Activated naive CD4-positive, alpha-beta T cell treated with anti-CD3 and anti-CD28 coated beads for 36 hours (primary cell): ENCODE measurements at regions of chr10 and their contacts with region 1.

Region 1: DNA sequence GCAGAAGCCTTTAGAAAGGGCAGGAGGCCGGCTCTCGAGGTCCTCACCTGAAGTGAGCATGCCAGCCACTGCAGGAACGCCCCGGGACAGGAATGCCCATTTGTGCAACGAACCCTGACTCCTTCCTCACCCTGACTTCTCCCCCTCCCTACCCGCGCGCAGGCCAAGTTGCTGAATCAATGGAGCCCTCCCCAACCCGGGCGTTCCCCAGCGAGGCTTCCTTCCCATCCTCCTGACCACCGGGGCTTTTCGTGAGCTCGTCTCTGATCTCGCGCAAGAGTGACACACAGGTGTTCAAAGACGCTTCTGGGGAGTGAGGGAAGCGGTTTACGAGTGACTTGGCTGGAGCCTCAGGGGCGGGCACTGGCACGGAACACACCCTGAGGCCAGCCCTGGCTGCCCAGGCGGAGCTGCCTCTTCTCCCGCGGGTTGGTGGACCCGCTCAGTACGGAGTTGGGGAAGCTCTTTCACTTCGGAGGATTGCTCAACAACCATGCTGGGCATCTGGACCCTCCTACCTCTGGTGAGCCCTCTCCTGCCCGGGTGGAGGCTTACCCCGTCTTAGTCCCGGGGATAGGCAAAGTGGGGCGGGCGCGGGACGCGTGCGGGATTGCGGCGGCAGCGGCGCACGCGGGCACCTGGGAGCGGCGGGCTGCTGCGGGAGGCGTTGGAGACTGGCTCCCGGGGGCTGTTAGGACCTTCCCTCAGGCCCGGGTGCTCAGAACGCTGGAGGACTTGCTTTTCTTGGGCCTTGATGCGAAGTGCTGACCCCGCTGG is at the start of gene FAS:
- DNase-seq: peak; percentile 96
- H3K4me3 Mint-ChIP-seq: peak within 1 kb of the TSS; percentile 92
- H3K27ac Mint-ChIP-seq: peak within 1 kb of the TSS; percentile 98
- H3K4me1 Mint-ChIP-seq: peaks cover 46% of the 10 kb centered on the region
- H3K27me3 Mint-ChIP-seq: no peaks in the 10 kb centered on the region
- total RNA-seq, gene FAS: 69.3 to 72.9 TPM

Region 2: GRCh38 chr10:88582806-88583583 is 407.6 kb before region 1 on chr10 and contains the start of gene RNLS:
- CTCF ChIA-PET with region 1: interaction called, 3 read pairs
- intact Hi-C with region 1: loop called (anchors 5 kb)
- DNase-seq: peak; percentile 76
- H3K4me3 Mint-ChIP-seq: peak within 1 kb of the TSS; percentile 82
- H3K27ac Mint-ChIP-seq: peak within 1 kb of the TSS; percentile 89
- H3K4me1 Mint-ChIP-seq: peaks cover 11% of the 10 kb centered on the region
- H3K27me3 Mint-ChIP-seq: peaks cover 5% of the 10 kb centered on the region
- total RNA-seq, gene RNLS: 4.0 to 4.4 TPM

Region 3: GRCh38 chr10:88880282-88881076 is 110.1 kb before region 1 on chr10:
- CTCF ChIA-PET with region 1: interaction called, 4 read pairs
- intact Hi-C with region 1: loop called (anchors 1 kb)
- DNase-seq: peak; percentile 82
- H3K4me3 Mint-ChIP-seq: peak overlapping the region; percentile 95
- H3K27ac Mint-ChIP-seq: peak overlapping the region; percentile 97
- H3K4me1 Mint-ChIP-seq: peaks cover 58% of the 10 kb centered on the region
- H3K27me3 Mint-ChIP-seq: no peaks in the 10 kb centered on the region

Region 4: GRCh38 chr10:88974446-88975376 is 15.9 kb before region 1 on chr10:
- CTCF ChIA-PET with region 1: interaction called, 6 read pairs
- intact Hi-C with region 1: loop called (anchors 1 kb)
- DNase-seq: no peak
- H3K4me3 Mint-ChIP-seq: peak overlapping the region; percentile 87
- H3K27ac Mint-ChIP-seq: peak overlapping the region; percentile 87
- H3K4me1 Mint-ChIP-seq: peaks cover 10% of the 10 kb centered on the region
- H3K27me3 Mint-ChIP-seq: no peaks in the 10 kb centered on the region

Region 5: DNA sequence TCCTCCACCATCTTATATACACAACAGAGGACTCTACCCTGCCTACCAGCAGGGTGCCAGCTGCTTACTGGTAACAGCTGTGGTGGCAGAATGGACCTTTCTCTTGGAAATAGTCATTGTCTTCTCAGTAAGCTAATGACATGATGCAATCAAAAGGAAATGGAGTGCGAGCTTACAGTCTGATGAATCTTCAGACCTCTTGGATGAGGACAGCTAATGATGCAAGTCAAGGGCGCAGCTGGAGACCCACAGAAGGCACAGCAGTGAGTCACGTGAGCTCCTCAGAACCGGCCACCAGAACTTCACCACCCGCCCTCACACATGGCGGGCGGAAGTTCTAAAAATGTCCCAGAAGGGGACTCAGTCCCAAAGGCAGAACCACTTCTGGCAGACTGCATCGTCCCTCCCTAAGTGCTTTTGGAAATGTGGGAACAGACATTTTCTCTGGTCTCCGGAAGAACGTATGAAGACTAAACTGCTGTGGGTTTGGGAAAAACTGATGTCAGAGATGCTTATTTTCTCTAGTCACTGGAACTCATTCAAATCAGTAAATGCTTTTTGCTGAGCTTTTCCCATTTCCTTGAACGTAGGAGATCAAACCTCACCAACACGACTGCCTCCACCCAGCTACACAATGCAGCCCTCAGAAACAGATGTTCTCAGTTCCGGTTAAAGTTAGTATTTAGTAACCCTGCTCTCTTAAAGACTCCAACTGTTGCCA is 96.4 kb after region 1 on chr10:
- CTCF ChIA-PET with region 1: interaction called, 3 read pairs
- intact Hi-C with region 1: loop called (anchors 1 kb)
- DNase-seq: peak; percentile 20
- H3K4me3 Mint-ChIP-seq: no peak overlapping the region
- H3K27ac Mint-ChIP-seq: no peak overlapping the region
- H3K4me1 Mint-ChIP-seq: peaks cover 5% of the 10 kb centered on the region
- H3K27me3 Mint-ChIP-seq: no peaks in the 10 kb centered on the region

Region 6: DNA sequence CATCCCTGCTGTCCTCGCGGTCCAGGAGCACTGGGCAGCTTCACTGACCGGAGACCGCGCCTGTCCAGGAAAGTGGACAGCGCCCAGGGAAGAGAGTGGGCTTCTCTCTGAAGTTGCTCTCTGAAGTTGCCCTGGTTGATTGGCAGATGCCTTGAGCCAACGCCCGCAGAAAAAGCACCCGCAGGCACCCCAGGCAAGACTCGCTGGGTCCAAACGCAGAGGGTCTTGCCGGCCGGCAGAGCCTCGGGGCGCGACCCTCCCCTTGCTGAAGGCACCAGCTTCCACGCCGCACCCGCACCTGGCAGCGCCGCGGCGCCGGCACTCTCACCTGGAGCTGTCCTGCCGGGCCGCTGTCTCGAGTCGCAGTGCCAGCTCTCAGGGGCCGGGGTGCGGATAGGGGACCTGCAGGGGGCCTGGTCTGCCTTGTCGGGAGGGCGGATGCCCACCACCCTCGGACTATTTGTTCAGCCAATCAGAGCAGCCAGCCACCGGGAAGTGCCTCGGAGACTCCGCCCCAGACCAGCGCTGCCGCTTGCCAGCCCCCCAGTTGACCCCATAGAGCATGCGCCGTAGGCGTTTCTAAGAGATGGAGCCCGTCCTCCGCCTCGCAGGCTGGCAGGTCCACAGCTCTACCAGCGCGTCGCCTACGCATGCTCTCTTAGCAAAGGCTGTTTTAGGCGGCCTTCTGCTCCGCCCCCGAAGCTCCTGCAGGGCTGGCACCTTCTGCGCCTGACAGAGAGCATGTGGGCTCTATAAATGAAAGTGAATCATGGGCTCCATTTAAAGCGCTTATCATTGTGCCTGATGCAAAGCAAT is 261.0 kb after region 1 on chr10 and contains the start of gene LIPA:
- CTCF ChIA-PET with region 1: no interaction called
- intact Hi-C with region 1: loop called (anchors 1 kb)
- DNase-seq: peak; percentile 95
- H3K4me3 Mint-ChIP-seq: peak within 1 kb of the TSS; percentile 84
- H3K27ac Mint-ChIP-seq: no peak within 1 kb of the TSS
- H3K4me1 Mint-ChIP-seq: peaks cover 38% of the 10 kb centered on the region
- H3K27me3 Mint-ChIP-seq: no peaks in the 10 kb centered on the region
- total RNA-seq, gene LIPA: 16.1 to 17.2 TPM